Left cardiac atrium (tissue), 4 donors: ENCODE measurements at regions of chr17 and their contacts with region 1.

Region 1: GRCh38 chr17:70552230-70552981 is 383.1 kb downstream of the KCNJ2 start:
- DNase-seq: no peak
- ATAC-seq: peak; percentile 55 to 56

Region 2: DNA sequence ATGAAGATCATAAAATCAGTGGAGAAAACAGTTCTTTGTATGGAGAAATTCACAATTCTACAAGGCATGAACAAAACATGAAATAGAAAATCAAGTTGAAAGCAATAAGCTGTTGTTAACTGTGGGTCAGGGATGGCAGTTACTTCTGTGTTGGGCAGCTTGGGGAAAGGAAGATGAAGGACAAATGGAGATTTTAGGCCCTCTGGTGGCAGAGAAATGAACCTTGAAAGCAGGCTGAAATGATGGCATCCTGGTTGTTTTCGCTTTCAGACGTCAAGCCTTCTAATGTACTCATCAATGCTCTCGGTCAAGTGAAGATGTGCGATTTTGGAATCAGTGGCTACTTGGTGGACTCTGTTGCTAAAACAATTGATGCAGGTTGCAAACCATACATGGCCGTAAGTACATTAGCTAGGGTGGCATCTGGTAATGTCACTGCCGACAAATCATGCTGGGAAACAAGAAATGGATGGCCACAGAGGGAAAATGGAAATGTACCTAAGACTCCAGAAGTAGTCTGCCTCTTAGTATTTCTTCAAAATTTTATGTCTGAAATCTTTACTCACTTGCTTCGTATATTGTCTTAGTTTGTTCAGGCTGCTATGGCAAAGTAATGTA is 1029.1 kb before region 1 on chr17:
- intact Hi-C with region 1: loop called in 1 of 2 experiments (anchors 5 kb)
- DNase-seq: no peak
- ATAC-seq: peak; percentile 65 to 67

Region 3: GRCh38 chr17:69575346-69575761 is 977.1 kb before region 1 on chr17:
- intact Hi-C with region 1: loop called in 1 of 2 experiments (anchors 10 kb)
- DNase-seq: no peak
- ATAC-seq: peak in 1 of 2 donors; percentile 81

Region 4: GRCh38 chr17:69607162-69607834 is 945.1 kb before region 1 on chr17:
- intact Hi-C with region 1: loop called in 1 of 2 experiments (anchors 5 kb)
- DNase-seq: peak; percentile 83
- ATAC-seq: peak; percentile 86 to 88

Region 5: GRCh38 chr17:70168977-70169708 is 383.3 kb before region 1 on chr17 and contains the start of gene KCNJ2:
- intact Hi-C with region 1: loop called (anchors 5 to 10 kb)
- DNase-seq: peak; percentile 90
- ATAC-seq: peak; percentile 95 to 99
- total RNA-seq, gene KCNJ2: 4.8 to 5.7 TPM

Region 6: GRCh38 chr17:70499067-70499786 is 53.2 kb before region 1 on chr17:
- intact Hi-C with region 1: no loop called
- DNase-seq: no peak
- ATAC-seq: no peak